Breast epithelium (tissue), 4 donors: ENCODE measurements at regions of chr9 and their contacts with region 1.

Region 1: DNA sequence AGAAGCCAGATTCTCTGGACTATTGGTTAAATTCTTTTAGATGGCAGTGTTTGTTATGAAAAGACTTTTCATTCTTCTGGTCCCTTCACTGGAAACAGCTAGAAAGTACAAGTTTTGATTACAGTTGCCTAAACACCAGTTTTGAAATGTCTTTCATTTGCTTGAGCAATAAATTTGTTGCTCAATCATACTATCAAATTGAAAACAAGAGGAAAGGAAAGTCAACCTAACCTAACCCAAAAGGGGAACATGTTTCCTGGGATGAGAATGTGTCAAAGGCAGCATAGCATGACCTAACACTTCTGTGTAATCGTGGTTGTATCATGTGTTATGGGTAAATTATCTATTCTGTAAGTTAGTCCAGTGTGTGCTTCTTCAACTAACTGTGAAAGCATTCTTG is 213.2 kb downstream of the TMC1 start:
- DNase-seq: no peak
- H3K4me3 ChIP-seq: no peak overlapping the region
- H3K27ac ChIP-seq: no peak overlapping the region
- H3K4me1 ChIP-seq: no peaks in the 10 kb centered on the region
- H3K27me3 ChIP-seq: no peaks in the 10 kb centered on the region
- CTCF ChIP-seq: no peak
- POLR2A ChIP-seq: no peak

Region 2: GRCh38 chr9:71928832-71929604 is 805.6 kb before region 1 on chr9:
- intact Hi-C with region 1: no loop called
- DNase-seq: no peak
- H3K4me3 ChIP-seq: no peak overlapping the region
- H3K27ac ChIP-seq: peak overlapping the region in 1 of 2 donors; percentile 12
- H3K4me1 ChIP-seq: no peaks in the 10 kb centered on the region
- H3K27me3 ChIP-seq: no peaks in the 10 kb centered on the region
- CTCF ChIP-seq: no peak
- POLR2A ChIP-seq: no peak

Region 3: GRCh38 chr9:72428329-72428728 is 306.3 kb before region 1 on chr9:
- intact Hi-C with region 1: no loop called
- DNase-seq: no peak
- H3K4me3 ChIP-seq: no peak overlapping the region
- H3K27ac ChIP-seq: no peak overlapping the region
- H3K4me1 ChIP-seq: no peaks in the 10 kb centered on the region
- H3K27me3 ChIP-seq: no peaks in the 10 kb centered on the region
- CTCF ChIP-seq: no peak
- POLR2A ChIP-seq: no peak

Region 4: DNA sequence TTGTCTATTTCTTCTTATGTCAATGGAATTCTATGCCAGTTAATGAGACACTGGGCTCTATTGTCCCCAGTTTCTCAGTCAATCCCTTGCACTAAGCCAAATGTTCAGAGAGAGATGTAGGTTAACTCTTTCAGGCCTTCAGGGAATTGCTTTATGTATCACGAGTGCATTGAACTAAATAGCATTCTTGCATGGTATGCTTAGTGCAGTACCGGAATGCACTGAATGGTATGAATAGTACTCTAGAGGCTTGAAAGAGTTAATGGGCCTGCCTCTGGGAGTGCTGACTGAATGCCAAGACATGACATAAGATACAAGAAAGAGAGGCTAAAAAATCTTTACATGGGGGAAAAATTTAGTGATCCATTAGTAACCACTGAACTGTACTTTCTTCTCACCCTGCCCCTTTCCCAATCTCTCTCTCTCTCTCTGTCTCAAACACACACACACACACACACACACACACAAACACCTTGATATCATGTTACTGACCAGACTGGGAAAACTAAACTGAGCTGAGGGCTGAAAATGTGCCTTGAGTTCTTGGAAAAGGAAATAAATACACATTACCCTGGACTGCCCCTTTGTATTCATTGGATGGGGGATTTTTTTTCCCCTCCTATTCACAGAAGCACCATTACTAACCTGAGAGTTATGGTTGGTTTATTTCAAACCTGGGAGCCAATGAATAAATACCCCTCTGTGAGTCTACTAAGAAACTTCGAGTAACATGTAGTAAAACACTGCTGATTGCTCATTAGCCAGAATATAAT is 248.6 kb before region 1 on chr9:
- intact Hi-C with region 1: no loop called
- DNase-seq: no peak
- H3K4me3 ChIP-seq: no peak overlapping the region
- H3K27ac ChIP-seq: no peak overlapping the region
- H3K4me1 ChIP-seq: no peaks in the 10 kb centered on the region
- H3K27me3 ChIP-seq: no peaks in the 10 kb centered on the region
- CTCF ChIP-seq: no peak
- POLR2A ChIP-seq: no peak

Region 5: DNA sequence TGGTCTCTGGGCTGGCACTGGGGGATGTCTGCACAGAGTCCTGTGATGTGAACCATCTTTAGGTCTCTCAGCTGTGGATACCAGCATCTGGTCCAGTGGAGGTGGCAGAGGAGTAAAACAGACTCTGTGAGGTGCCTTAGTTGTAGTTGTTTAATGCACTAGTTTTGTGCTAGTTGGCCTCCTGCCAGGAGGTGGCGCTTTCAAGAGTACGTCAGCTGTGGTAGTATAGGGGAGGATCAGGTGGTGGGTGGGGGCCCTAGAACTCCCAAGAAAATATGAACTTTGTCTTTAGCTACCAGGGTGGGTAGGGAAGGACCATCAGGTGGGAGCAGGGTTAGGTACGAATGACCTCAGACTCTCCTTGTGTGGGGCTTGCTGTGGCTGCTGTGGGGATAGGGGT is 16.1 kb before region 1 on chr9:
- intact Hi-C with region 1: loop called (anchors 2 kb)
- DNase-seq: no peak
- H3K4me3 ChIP-seq: no peak overlapping the region
- H3K27ac ChIP-seq: no peak overlapping the region
- H3K4me1 ChIP-seq: no peaks in the 10 kb centered on the region
- H3K27me3 ChIP-seq: no peaks in the 10 kb centered on the region
- CTCF ChIP-seq: no peak
- POLR2A ChIP-seq: no peak